A549 (cell line): ENCODE measurements at regions of chr19 and their contacts with region 1.

Region 1: DNA sequence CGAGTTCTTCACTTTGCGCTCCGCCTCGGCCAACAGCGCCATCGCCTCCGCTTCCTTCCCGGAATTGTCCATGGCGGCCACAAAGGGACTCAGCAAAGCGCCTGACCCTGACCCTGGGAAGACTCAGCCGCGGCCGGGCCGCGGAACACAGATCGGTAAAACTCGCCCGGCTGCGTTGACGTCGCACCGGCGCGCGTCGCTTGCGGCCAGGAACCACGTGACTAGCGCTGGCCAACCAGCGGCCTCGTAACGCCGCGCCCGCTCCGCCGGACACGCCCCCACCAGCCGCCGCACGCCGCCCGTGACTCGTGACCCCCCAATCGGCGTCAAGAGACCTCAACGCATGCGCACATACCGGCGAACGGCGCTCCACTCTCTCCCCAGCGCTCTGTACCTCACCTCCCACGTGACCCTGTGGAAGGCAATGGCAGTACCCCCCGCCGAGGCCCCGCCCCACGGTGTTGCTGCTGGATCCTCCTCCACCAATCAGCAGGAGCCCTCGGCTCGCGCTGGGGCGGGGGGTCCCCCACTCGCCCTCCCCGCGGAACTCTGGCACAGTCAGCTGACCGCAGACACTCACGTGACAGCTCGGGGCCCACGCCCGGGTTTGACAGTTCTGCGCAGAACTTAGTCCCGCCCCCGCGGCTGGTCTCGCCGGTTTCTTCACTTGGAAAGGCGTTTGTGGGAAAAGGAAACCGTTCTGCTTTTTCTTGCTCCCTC is at the start of gene NAPA:
- DNase-seq: peak; percentile 100
- ATAC-seq: peak; percentile 87 to 96
- H3K4me3 ChIP-seq: peak within 1 kb of the TSS; percentile 89
- H3K27ac ChIP-seq: peak within 1 kb of the TSS; percentile 90 to 92
- H3K4me1 ChIP-seq: peaks cover 28% of the 10 kb centered on the region
- CTCF ChIP-seq: no peak
- EP300 ChIP-seq: no peak
- POLR2A ChIP-seq: peak; percentile 67
- RAD21 ChIP-seq: peak; percentile 64 to 79; a peak in 4 of 5 replicates
- polyA plus RNA-seq, gene NAPA: 69.6 and 74.3 TPM in 2 replicates

Region 2: GRCh38 chr19:47428177-47428894 is 86.7 kb before region 1 on chr19:
- CTCF ChIA-PET with region 1: interaction called, 78 read pairs
- POLR2A ChIA-PET with region 1: no interaction called
- DNase-seq: peak; percentile 95 to 98
- ATAC-seq: peak; percentile 75 to 85
- H3K4me3 ChIP-seq: peak overlapping the region; percentile 42
- H3K27ac ChIP-seq: peak overlapping the region in 1 of 2 experiments; percentile 43; a peak in 2 of 6 replicates
- H3K4me1 ChIP-seq: peaks cover 20% of the 10 kb centered on the region
- CTCF ChIP-seq: no peak
- EP300 ChIP-seq: no peak
- POLR2A ChIP-seq: no peak
- RAD21 ChIP-seq: no peak

Region 3: DNA sequence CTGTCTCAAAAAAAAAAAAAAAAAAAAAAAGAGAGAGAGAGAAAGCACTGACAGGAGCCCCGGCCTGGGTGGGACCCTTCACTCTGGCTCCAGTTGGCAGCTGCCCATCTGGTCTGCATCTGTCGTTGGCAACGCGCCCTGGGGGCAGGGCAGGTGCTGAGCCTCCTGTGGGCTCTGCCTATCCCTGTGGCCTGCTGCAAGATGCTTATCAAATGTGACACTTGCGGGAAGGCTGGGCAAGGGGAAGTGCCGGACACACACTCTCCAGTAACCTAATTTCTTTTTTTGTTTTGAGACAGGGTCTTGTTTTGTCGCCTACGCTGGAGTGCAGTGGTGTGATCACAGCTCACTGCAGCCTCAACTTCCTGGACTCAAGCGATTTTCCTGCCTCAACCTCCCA is 20.3 kb before region 1 on chr19:
- CTCF ChIA-PET with region 1: interaction called, 29 read pairs
- POLR2A ChIA-PET with region 1: no interaction called
- DNase-seq: no peak
- ATAC-seq: no peak
- H3K4me3 ChIP-seq: no peak overlapping the region
- H3K27ac ChIP-seq: no peak overlapping the region
- H3K4me1 ChIP-seq: no peaks in the 10 kb centered on the region
- CTCF ChIP-seq: no peak
- EP300 ChIP-seq: no peak
- POLR2A ChIP-seq: no peak
- RAD21 ChIP-seq: no peak

Region 4: DNA sequence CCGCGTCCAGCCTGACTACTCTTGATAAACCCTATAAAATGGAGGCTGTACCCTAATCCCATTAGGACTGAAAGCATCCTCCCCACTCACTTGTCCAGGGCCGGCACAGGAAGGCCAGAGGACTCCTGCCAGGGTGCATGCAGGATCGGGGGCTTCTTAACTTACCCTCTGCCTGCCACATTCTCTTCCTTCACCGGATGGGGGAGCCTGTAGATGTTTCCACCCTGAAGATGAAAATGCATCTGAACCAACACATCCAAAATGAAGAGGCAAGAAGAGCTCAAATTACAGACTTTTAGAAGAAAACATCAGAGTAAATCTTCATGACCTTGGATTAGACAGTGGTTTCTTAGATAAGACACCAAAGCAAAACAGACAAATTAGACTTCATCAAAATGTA is 25.7 kb after region 1 on chr19:
- CTCF ChIA-PET with region 1: interaction called, 19 read pairs
- POLR2A ChIA-PET with region 1: no interaction called
- DNase-seq: peak; percentile 43 to 46
- ATAC-seq: peak; percentile 52 to 67; a peak in 3 of 6 replicates
- H3K4me3 ChIP-seq: no peak overlapping the region
- H3K27ac ChIP-seq: no peak overlapping the region
- H3K4me1 ChIP-seq: no peaks in the 10 kb centered on the region
- CTCF ChIP-seq: peak; percentile 31; the same call in 2 of the 3 replicates
- EP300 ChIP-seq: no peak
- POLR2A ChIP-seq: no peak
- RAD21 ChIP-seq: peak in 1 of 2 experiments; percentile 56; a peak in 2 of 5 replicates

Region 5: GRCh38 chr19:47582320-47582909 is 67.4 kb after region 1 on chr19:
- CTCF ChIA-PET with region 1: interaction called, 16 read pairs
- POLR2A ChIA-PET with region 1: no interaction called
- DNase-seq: no peak
- ATAC-seq: no peak
- H3K4me3 ChIP-seq: no peak overlapping the region
- H3K27ac ChIP-seq: no peak overlapping the region
- H3K4me1 ChIP-seq: no peaks in the 10 kb centered on the region
- CTCF ChIP-seq: no peak
- EP300 ChIP-seq: no peak
- POLR2A ChIP-seq: no peak
- RAD21 ChIP-seq: no peak

Region 6: GRCh38 chr19:47707135-47707925 is 192.3 kb after region 1 on chr19:
- CTCF ChIA-PET with region 1: interaction called, 11 read pairs
- POLR2A ChIA-PET with region 1: no interaction called
- DNase-seq: peak; percentile 76 to 93
- ATAC-seq: peak; percentile 94 to 97
- H3K4me3 ChIP-seq: no peak overlapping the region
- H3K27ac ChIP-seq: no peak overlapping the region
- H3K4me1 ChIP-seq: 0 out of 3 replicates have a peak, but pooled peaks cover 5% of the 10 kb centered on the region
- CTCF ChIP-seq: peak; percentile 86
- EP300 ChIP-seq: no peak
- POLR2A ChIP-seq: no peak
- RAD21 ChIP-seq: peak; percentile 90 to 94